ENCODE measurements at regions of chr12 and their contacts with region 1.

Region 1: DNA sequence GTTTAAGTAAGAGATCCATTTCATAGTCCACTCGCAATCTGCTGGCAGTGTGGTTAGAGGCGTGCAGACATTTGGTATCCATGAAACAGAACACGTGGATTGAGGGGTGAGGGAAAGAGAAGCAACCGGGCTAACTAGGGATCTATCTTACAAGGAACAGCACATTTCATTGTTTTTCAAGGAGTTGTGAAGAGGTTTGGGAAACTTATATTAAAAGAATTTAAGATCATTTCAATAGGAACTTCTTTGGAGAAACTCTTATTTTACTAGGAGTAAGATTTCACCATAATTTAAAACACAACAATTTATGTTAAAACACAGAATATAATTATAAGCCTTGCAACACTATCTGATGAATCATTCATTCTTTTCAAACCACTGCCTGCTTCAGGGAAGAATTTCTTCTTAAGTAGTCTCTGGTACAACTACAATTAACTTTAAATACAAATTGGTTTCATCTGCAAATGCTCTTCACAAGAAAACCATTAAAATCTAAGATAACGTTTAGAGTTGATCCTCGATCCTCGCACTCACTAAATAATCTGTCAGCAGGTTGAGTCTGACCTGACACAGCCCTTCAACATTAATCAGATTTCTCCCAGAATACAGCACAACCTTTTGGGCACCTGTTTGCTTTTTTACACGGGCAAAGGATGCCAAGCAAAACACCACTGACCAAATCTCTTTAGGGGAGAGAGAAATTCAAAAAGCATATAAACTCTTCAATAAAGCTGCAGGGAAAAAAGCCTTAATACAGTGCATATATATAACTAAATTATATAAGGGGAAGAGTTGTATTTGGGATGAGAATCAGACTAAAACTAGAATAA is 27.3 kb downstream of the PPTC7 start:
- DNase-seq: no peak
- H3K4me3 ChIP-seq: no peak overlapping the region
- H3K27ac ChIP-seq: no peak overlapping the region
- H3K4me1 ChIP-seq: peaks cover 0 to 16% (median 8%) of the 10 kb centered on the region in 4 experiments
- H3K27me3 ChIP-seq: no peaks in the 10 kb centered on the region

Region 2: DNA sequence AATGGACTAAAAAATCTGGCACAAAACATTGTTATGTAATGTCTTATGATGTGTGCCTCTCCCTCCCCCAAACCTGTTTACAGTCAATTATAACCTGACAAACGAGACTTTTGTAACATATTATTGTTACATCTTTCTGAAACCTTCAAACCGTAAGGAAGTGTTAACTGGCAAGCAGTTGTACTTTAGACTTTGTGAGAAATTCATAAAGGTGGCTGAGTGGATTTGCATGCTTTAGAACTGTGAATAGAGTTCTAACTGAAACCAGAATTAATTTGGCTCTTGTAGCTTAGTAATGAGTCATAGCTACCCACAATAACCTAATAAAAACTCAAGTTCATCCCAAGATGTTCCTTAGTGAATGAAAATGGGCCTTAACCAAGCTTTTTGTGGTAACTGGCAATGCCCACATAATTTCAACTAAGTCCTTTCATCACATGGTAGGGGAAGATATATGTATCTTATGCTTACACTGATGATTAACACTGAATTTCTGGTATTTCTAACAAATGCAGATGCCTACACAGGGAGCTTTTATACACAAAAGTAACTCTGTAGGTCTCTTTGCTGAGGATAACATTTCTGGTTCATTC is 24.0 kb before region 1 on chr12:
- CTCF ChIA-PET with region 1: interaction called, 30 read pairs
- POLR2A ChIA-PET with region 1: no interaction called
- DNase-seq: no peak
- H3K4me3 ChIP-seq: no peak overlapping the region
- H3K27ac ChIP-seq: no peak overlapping the region
- H3K4me1 ChIP-seq: no peaks in the 10 kb centered on the region
- H3K27me3 ChIP-seq: no peaks in the 10 kb centered on the region

Region 3: DNA sequence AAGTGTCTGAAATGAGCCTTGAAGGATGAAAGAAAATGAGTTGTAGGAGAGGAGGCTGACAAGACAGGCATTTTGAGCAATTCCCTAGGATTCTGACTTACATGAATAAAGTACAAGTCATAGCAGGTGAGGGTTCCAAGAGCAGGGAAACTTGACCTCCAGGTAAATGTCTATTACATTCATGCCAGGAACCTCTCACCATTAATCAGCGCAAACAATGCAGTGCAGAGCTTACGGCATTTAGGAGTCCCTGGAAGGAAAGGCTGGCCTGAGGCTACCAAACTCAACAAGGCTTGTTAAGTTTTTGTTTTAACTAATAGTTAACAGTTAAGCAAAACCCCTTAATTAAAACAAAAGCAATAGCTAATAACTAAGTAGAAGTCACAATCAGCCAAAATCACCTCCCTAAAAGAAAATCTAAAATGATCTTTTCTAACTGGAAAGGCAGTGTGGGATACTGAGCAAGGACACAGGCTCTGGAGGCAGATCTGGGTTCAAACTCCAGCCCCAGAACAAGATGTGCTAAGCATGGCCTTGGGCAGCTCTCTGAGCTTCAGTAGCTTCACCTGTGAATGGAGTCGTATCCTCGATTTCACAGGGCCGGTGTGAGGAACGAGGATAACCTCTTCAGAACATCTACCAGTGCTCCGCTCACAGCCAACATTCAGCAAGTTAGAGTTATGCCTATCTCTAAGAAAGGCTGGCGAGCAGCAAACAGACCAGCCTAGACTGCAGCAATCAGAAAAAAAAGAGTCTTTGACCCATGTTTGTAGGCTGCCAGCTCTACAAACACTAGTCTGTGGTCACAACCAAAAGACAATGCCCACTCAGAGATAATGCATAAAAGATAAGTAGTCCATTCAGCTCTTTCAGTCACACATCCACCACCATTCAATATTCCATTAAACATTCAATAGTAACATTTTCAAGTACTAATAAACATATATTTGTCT is 10.4 kb after region 1 on chr12:
- CTCF ChIA-PET with region 1: interaction called, 18 read pairs
- POLR2A ChIA-PET with region 1: no interaction called
- DNase-seq: no peak
- H3K4me3 ChIP-seq: no peak overlapping the region
- H3K27ac ChIP-seq: no peak overlapping the region
- H3K4me1 ChIP-seq: peaks cover 6 to 48% (median 21%) of the 10 kb centered on the region in 4 experiments
- H3K27me3 ChIP-seq: no peaks in the 10 kb centered on the region

Region 4: DNA sequence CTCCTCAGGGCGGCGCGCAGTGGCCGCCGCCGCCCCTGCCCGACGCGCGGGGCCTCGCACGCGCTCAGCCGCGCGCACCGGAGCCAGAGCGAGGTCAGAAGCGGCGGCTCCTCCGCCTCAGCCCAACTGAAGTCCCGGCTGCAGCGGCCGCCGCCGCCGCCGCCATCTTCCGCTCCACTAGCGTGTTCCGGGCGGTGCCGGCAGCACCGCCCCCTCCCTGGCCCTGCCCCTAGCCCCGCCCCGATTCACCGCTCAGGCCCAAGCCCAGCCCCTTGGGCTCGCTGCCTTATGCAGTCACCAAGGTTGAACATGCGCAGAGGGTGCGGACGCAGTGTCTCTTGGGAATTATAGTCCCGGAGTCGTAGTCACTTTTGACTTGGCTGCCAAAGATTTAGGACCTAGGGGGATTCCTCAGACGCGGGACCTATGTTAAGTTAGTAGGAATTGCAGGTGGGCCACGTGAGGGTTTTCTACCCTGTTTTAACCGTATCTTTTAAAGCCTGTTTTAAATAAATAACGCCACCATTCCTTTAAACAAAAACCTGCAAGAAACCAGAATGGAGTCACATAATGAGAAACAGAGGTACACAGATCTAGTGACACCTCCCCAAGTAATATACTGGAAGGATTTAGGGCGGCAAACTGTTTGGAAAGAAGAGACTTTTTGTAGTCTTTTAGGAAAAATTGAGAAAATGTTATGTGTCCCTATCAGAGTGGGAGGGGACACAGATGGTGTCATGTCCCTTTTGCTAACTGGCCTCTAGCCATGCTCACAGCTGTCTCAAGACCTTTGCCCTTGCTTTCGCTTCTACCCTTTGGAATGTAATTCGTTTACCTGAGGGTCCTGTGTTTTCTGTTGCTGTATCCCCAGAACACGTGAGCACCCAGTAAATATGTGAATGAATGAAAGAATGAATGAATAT is 27.6 kb after region 1 on chr12 and contains the start of gene PPTC7:
- CTCF ChIA-PET with region 1: interaction called, 15 read pairs
- POLR2A ChIA-PET with region 1: no interaction called
- DNase-seq: peak; percentile 95 to 97 (median 96)
- H3K4me3 ChIP-seq: peak within 1 kb of the TSS; percentile 90 to 99 (median 95)
- H3K27ac ChIP-seq: peak within 1 kb of the TSS; percentile 83 to 86
- H3K4me1 ChIP-seq: peaks cover 31 to 58% (median 52%) of the 10 kb centered on the region in 4 experiments
- H3K27me3 ChIP-seq: no peaks in the 10 kb centered on the region

Measured in common myeloid progenitor, CD34-positive (primary cell).